CD8-positive, alpha-beta T cell (primary cell): ENCODE measurements at regions of chr11 and their contacts with region 1.

Region 1: GRCh38 chr11:70202898-70203748 is at the start of gene FADD:
- DNase-seq: peak; percentile 82 to 97 (median 91)
- ATAC-seq: peak; percentile 56
- H3K4me3 ChIP-seq: peak within 1 kb of the TSS; percentile 81 to 97
- H3K4me3 Mint-ChIP-seq: peak within 1 kb of the TSS; percentile 92
- H3K27ac ChIP-seq: peak within 1 kb of the TSS; percentile 92 to 95
- H3K27ac Mint-ChIP-seq: peak within 1 kb of the TSS; percentile 98
- H3K4me1 ChIP-seq: peaks cover 34% of the 10 kb centered on the region
- H3K4me1 Mint-ChIP-seq: peaks cover 45% of the 10 kb centered on the region
- H3K27me3 ChIP-seq: no peaks in the 10 kb centered on the region
- H3K27me3 Mint-ChIP-seq: no peaks in the 10 kb centered on the region
- CTCF ChIP-seq: no peak
- total RNA-seq, gene FADD: 10.5 to 11.0 TPM

Region 2: DNA sequence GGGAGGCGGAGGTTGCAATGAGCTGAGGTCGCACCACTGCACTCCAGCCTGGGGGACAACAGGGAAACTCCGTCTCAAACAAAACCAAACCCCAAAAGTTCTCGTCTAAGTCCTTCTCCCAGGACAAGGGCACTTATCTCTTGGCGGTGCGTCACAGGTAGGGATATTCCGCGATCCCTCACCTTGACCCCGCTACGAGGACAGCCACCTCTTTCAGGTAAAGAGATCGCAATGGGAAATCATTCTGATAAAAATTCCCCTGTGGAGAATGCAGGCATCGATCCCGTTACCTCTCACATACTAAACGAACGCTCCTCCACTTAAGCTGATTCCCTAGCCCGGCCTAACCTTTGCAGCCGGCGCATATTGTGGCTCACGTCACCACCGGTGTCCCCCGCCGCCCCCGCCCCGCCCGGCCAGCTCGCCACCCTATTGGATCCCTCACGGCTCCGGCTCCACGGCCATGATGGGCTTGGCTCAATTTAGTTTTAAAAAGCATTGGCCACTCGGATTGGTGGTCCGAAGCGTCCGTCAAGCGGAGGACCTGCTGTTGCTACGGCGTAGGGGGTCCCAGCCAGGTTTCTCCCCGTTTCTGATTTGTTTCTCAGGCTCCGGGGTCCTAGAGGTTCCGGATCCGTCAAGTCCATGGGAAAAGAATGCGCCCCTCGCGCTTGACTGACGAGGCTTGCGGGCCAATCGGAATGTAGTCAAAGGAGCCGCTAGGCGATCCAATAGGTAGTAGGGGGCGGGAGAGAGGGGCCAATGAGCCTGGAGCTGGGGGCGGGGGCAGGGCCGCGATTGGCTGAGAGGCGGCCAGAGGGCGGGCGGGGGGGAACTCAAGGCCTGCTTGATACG is 1743.0 kb before region 1 on chr11:
- CTCF ChIA-PET with region 1: no interaction called
- POLR2A ChIA-PET with region 1: no interaction called
- intact Hi-C with region 1: loop called in 1 of 2 experiments (anchors 5 kb)
- DNase-seq: peak; percentile 90 to 98 (median 94)
- ATAC-seq: peak; percentile 91
- H3K4me3 ChIP-seq: peak overlapping the region; percentile 92 to 95
- H3K4me3 Mint-ChIP-seq: peak overlapping the region; percentile 97
- H3K27ac ChIP-seq: peak overlapping the region; percentile 95 to 98
- H3K27ac Mint-ChIP-seq: peak overlapping the region; percentile 98
- H3K4me1 ChIP-seq: peaks cover 35% of the 10 kb centered on the region
- H3K4me1 Mint-ChIP-seq: peaks cover 38% of the 10 kb centered on the region
- H3K27me3 ChIP-seq: no peaks in the 10 kb centered on the region
- H3K27me3 Mint-ChIP-seq: no peaks in the 10 kb centered on the region
- CTCF ChIP-seq: no peak

Region 3: DNA sequence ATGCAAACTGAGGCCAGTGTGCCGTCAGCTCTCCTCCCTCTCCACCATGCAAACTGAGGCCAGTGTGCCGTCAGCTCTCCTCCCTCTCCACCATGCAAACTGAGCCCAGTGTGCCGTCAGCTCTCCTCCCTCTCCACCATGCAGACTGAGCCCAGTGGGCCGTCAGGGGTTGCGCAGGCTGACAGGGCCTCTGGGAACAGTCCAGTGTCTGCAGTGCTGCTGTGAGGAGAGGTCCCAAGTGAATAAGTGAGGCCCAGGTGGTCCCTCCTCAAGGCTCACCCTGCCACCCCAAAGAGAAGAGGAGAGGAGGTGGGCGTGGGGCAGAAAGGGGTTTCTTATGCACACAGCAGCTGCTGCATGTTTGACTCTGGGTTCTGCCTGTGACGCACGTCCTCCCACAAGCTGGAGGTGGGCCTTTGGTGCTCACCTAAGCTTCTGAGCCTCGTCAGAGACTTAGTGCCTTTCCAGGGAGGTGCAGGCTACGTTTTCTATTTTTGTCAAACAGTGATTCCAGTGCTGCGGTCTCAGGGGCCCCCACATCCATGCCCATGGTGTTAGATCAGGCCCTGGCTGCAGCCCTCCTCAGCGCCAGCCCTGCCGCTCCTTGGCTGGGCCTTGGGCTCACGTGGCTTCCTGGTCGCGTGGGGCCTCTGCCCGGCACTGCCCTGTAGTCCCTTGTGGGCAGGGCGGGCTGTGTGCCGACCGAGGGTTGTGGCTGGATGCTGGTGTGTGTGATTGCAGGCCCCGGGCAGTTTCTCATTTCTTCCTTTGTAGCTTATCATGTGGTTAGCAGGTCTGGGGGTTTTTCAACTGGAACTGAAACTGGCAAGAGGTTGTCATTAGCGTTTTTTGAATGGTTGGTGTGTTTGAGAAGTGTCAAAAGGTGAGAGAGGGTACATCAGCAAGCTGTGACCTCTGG is 1147.3 kb before region 1 on chr11:
- CTCF ChIA-PET with region 1: no interaction called
- POLR2A ChIA-PET with region 1: no interaction called
- intact Hi-C with region 1: loop called in 1 of 2 experiments (anchors 10 kb)
- DNase-seq: peak in 5 of 9 experiments; percentile 9 to 78 (median 57)
- ATAC-seq: peak; percentile 83
- H3K4me3 ChIP-seq: no peak overlapping the region
- H3K4me3 Mint-ChIP-seq: no peak overlapping the region
- H3K27ac ChIP-seq: peak overlapping the region in 1 of 2 experiments; percentile 78
- H3K27ac Mint-ChIP-seq: peak overlapping the region; percentile 86
- H3K4me1 ChIP-seq: no peaks in the 10 kb centered on the region
- H3K4me1 Mint-ChIP-seq: peaks cover 26% of the 10 kb centered on the region
- H3K27me3 ChIP-seq: no peaks in the 10 kb centered on the region
- H3K27me3 Mint-ChIP-seq: no peaks in the 10 kb centered on the region
- CTCF ChIP-seq: no peak

Region 4: DNA sequence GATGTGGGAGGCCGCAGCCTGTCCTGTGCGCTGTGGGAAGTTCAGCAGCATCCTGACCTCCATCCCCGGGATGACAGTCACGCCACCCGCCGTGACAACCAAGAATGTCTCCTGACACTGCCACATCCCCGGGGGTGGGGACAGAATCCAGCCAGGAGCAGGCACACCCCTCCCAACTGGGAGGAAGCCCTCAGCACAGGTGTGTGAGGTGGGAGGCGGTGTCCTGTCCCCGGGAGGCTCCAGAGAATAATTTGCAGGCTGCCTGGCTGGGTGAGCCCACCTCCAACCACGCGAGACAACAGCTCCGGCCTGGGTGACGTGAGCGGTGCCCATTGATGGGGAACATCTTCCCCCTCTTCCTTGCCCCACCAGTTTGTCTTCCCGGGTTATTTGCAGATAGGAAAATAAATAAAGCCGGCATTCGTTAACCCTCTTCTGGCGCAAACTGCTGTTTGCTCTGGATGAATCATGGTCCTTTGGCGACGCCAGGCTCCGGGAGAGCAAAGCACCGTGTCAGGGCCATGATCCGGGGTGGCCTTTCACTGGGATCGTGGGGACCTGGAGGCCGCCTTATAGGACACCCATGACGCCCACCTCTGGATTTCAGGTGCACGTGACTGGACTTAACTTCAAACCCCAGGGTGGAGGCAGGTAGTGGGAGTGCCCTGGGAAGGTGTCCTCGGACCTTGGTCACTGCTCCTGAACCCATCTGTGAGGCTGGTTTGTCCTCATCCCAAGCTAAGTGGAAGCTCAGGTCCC is 548.4 kb before region 1 on chr11:
- CTCF ChIA-PET with region 1: no interaction called
- POLR2A ChIA-PET with region 1: no interaction called
- intact Hi-C with region 1: no loop called
- DNase-seq: no peak
- ATAC-seq: no peak
- H3K4me3 ChIP-seq: no peak overlapping the region
- H3K4me3 Mint-ChIP-seq: no peak overlapping the region
- H3K27ac ChIP-seq: no peak overlapping the region
- H3K27ac Mint-ChIP-seq: no peak overlapping the region
- H3K4me1 ChIP-seq: no peaks in the 10 kb centered on the region
- H3K4me1 Mint-ChIP-seq: no peaks in the 10 kb centered on the region
- H3K27me3 ChIP-seq: no peaks in the 10 kb centered on the region
- H3K27me3 Mint-ChIP-seq: no peaks in the 10 kb centered on the region
- CTCF ChIP-seq: no peak

Region 5: DNA sequence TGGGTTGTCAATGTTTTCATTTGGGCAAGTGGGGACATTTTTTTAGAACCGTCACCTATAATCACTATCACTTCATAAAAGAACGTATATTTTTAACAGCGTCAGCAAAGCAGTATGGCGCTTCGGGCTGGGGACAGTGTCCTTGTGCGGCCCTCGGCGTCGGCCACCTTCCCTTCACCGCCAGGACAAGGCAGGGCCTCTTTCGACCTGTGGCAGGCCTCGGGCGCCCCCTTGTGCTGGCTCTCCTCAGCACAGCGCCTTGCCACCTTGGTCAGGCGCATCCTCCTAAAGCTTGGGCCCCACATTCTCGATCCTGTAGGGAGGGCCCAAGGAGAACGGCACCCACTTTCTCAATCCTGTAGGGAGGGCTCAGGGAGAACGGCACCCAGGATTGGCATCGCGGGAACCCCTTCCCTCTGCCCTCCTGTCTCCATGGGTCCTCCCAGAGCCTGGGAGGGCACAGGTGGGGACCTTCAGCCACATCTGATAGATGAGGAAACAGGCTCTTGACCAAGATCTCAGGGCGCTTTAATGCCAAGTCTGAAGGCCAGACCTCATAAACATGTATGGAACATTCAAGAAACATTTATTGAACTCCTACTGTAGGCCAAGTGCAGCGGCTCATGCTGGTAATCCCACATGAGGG is 11.5 kb before region 1 on chr11:
- CTCF ChIA-PET with region 1: interaction called, 11 read pairs
- POLR2A ChIA-PET with region 1: no interaction called
- intact Hi-C with region 1: no loop called
- DNase-seq: peak in 7 of 9 experiments; percentile 28 to 57 (median 52)
- ATAC-seq: peak; percentile 62
- H3K4me3 ChIP-seq: no peak overlapping the region
- H3K4me3 Mint-ChIP-seq: no peak overlapping the region
- H3K27ac ChIP-seq: no peak overlapping the region
- H3K27ac Mint-ChIP-seq: no peak overlapping the region
- H3K4me1 ChIP-seq: no peaks in the 10 kb centered on the region
- H3K4me1 Mint-ChIP-seq: peaks cover 2% of the 10 kb centered on the region
- H3K27me3 ChIP-seq: peaks cover 0 to 5% of the 10 kb centered on the region in 2 experiments
- H3K27me3 Mint-ChIP-seq: peaks cover 9% of the 10 kb centered on the region
- CTCF ChIP-seq: peak; percentile 16

Region 6: GRCh38 chr11:71448257-71449171 is 1245.4 kb after region 1 on chr11 and contains the start of gene DHCR7:
- CTCF ChIA-PET with region 1: no interaction called
- POLR2A ChIA-PET with region 1: no interaction called
- intact Hi-C with region 1: loop called in 1 of 2 experiments (anchors 5 kb)
- DNase-seq: peak; percentile 80 to 95 (median 93)
- ATAC-seq: peak; percentile 70
- H3K4me3 ChIP-seq: peak within 1 kb of the TSS; percentile 77 to 98
- H3K4me3 Mint-ChIP-seq: peak within 1 kb of the TSS; percentile 93
- H3K27ac ChIP-seq: peak within 1 kb of the TSS; percentile 80 to 82
- H3K27ac Mint-ChIP-seq: peak within 1 kb of the TSS; percentile 90
- H3K4me1 ChIP-seq: peaks cover 32% of the 10 kb centered on the region
- H3K4me1 Mint-ChIP-seq: peaks cover 47% of the 10 kb centered on the region
- H3K27me3 ChIP-seq: no peaks in the 10 kb centered on the region
- H3K27me3 Mint-ChIP-seq: no peaks in the 10 kb centered on the region
- CTCF ChIP-seq: no peak
- total RNA-seq, gene DHCR7: 33.9 to 40.0 TPM